ENCODE measurements at regions of chr2 and their contacts with region 1.

Region 1: DNA sequence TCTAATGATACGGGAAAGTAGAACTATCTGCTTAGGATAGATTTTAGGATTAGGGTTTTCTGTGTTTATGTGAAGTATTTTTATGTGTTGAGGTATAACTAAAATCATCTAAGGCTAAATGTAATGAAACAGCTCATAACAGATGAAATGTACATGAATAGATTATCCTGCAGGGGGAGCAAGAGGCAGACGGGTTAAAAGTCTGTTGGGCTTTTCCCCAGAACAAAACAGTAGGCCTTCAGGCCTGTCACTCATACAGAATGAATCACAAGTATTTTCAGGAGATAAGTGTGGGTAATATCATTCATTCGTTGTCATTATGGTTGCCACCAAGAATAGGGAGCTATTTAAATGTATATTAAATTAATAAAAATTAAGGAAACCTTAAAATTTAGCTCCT is 107.9 kb upstream of the IL1R2 start:
- DNase-seq: peak; percentile 60
- H3K4me3 Mint-ChIP-seq: no peak overlapping the region
- H3K27ac Mint-ChIP-seq: peak overlapping the region; percentile 2
- H3K4me1 Mint-ChIP-seq: peaks cover 21% of the 10 kb centered on the region
- H3K27me3 Mint-ChIP-seq: no peaks in the 10 kb centered on the region

Region 2: DNA sequence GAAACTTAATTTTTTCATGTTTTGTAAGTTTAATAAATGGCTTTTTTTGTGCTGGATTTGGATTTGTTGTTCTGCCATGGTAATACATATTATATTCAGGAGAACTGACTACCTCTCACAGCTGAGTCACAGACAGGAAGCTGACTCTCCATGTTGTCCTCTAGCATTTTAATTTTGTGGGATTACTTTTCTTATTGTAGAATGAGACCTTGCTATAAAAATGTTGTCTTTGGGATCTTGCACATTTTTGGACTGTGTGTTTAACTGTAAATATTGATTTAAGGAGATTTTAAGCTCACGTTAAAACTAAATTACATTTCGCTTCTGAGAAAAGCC is 137.5 kb before region 1 on chr2:
- CTCF ChIA-PET with region 1: no interaction called
- POLR2A ChIA-PET with region 1: no interaction called
- intact Hi-C with region 1: no loop called
- DNase-seq: no peak
- H3K4me3 Mint-ChIP-seq: no peak overlapping the region
- H3K27ac Mint-ChIP-seq: no peak overlapping the region
- H3K4me1 Mint-ChIP-seq: peaks cover 65% of the 10 kb centered on the region
- H3K27me3 Mint-ChIP-seq: no peaks in the 10 kb centered on the region

Region 3: GRCh38 chr2:101793277-101793969 is 90.4 kb before region 1 on chr2:
- CTCF ChIA-PET with region 1: no interaction called
- POLR2A ChIA-PET with region 1: no interaction called
- intact Hi-C with region 1: no loop called
- DNase-seq: no peak
- H3K4me3 Mint-ChIP-seq: no peak overlapping the region
- H3K27ac Mint-ChIP-seq: no peak overlapping the region
- H3K4me1 Mint-ChIP-seq: peaks cover 51% of the 10 kb centered on the region
- H3K27me3 Mint-ChIP-seq: no peaks in the 10 kb centered on the region

Region 4: GRCh38 chr2:101900375-101900774 is 16.5 kb after region 1 on chr2:
- CTCF ChIA-PET with region 1: interaction called, 16 read pairs
- POLR2A ChIA-PET with region 1: no interaction called
- intact Hi-C with region 1: no loop called
- DNase-seq: peak; percentile 88
- H3K4me3 Mint-ChIP-seq: peak overlapping the region; percentile 56
- H3K27ac Mint-ChIP-seq: peak overlapping the region; percentile 93
- H3K4me1 Mint-ChIP-seq: peaks cover 40% of the 10 kb centered on the region
- H3K27me3 Mint-ChIP-seq: peaks cover 15% of the 10 kb centered on the region

Region 5: GRCh38 chr2:101993772-101994171 is 109.9 kb after region 1 on chr2:
- CTCF ChIA-PET with region 1: interaction called, 46 read pairs
- POLR2A ChIA-PET with region 1: interaction called, 4 read pairs
- intact Hi-C with region 1: no loop called
- DNase-seq: no peak
- H3K4me3 Mint-ChIP-seq: no peak overlapping the region
- H3K27ac Mint-ChIP-seq: no peak overlapping the region
- H3K4me1 Mint-ChIP-seq: peaks cover 13% of the 10 kb centered on the region
- H3K27me3 Mint-ChIP-seq: peaks cover 33% of the 10 kb centered on the region

Region 6: GRCh38 chr2:102013206-102014040 is 129.6 kb after region 1 on chr2:
- CTCF ChIA-PET with region 1: interaction called, 51 read pairs
- POLR2A ChIA-PET with region 1: no interaction called
- intact Hi-C with region 1: no loop called
- DNase-seq: peak; percentile 42
- H3K4me3 Mint-ChIP-seq: no peak overlapping the region
- H3K27ac Mint-ChIP-seq: peak overlapping the region; percentile 87
- H3K4me1 Mint-ChIP-seq: peaks cover 49% of the 10 kb centered on the region
- H3K27me3 Mint-ChIP-seq: no peaks in the 10 kb centered on the region

Region 7: DNA sequence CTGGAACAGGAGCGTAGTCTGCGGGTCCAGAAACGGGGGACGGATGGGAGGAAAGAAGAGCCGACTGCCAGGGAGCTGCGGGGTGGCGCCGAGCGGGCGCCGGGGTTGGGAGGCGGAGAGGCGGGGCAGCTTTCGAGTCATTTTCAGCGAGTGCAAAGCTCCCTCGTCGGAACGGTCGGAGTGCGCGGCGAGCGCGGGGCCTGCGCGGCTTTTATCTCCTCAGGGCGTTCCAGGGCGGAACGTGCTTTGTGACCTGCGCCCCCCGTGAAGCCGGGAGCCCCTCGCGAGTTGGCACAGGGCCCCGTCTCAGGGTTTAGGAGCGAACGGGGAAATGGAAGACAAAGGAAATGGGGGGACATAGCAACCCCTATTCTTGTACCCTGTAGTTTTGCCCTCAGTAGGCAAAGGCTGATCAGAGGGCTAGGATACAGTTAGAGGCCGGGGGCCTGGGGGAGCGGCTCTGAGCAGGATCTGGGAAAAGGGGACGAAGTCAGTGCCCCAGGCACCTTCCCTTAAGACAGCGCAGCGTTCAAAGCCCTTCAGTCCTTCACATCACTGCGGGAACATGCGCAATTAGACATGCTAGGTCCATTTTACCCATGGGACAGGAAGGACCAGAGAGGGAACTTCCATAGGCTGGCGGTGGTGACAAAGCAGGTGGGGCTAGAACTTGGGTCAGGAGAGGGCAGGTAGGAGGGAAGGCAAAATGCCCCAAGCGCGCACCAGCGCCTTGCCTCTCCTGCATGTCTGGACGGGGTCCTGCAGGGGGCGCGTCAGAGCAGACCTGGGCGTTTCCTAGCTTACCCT is 367.4 kb after region 1 on chr2:
- CTCF ChIA-PET with region 1: interaction called, 11 read pairs
- POLR2A ChIA-PET with region 1: no interaction called
- intact Hi-C with region 1: no loop called
- DNase-seq: peak; percentile 83
- H3K4me3 Mint-ChIP-seq: peak overlapping the region; percentile 66
- H3K27ac Mint-ChIP-seq: peak overlapping the region; percentile 64
- H3K4me1 Mint-ChIP-seq: peaks cover 36% of the 10 kb centered on the region
- H3K27me3 Mint-ChIP-seq: no peaks in the 10 kb centered on the region